A549 (cell line): ENCODE measurements at regions of chr1 and their contacts with region 1.

Region 1: GRCh38 chr1:151693076-151693651 is 23.4 kb downstream of the CELF3 start:
- DNase-seq: peak; percentile 38 to 54
- ATAC-seq: peak; percentile 83 to 90
- H3K4me3 ChIP-seq: no peak overlapping the region
- H3K27ac ChIP-seq: no peak overlapping the region
- H3K4me1 ChIP-seq: no peaks in the 10 kb centered on the region
- CTCF ChIP-seq: peak; percentile 75
- EP300 ChIP-seq: no peak
- POLR2A ChIP-seq: no peak
- RAD21 ChIP-seq: peak; percentile 73 to 86

Region 2: GRCh38 chr1:151720974-151721787 is 28.0 kb after region 1 on chr1 and contains the start of gene RIIAD1:
- CTCF ChIA-PET with region 1: interaction called, 10 read pairs
- POLR2A ChIA-PET with region 1: no interaction called
- DNase-seq: peak in 1 of 2 experiments; percentile 62
- ATAC-seq: peak; percentile 82 to 85
- H3K4me3 ChIP-seq: peak within 1 kb of the TSS; percentile 42
- H3K27ac ChIP-seq: peak within 1 kb of the TSS in 1 of 2 experiments; percentile 21; a peak in 1 of 6 replicates
- H3K4me1 ChIP-seq: peaks cover 23% of the 10 kb centered on the region; the same call in 2 of the 3 replicates
- CTCF ChIP-seq: peak; percentile 39
- EP300 ChIP-seq: no peak
- POLR2A ChIP-seq: no peak
- RAD21 ChIP-seq: peak; percentile 23 to 24; a peak in 1 of 5 replicates
- polyA plus RNA-seq, gene RIIAD1: not detected in 2 replicates

Region 3: GRCh38 chr1:151739590-151740375 is 46.6 kb after region 1 on chr1:
- CTCF ChIA-PET with region 1: interaction called, 24 read pairs
- POLR2A ChIA-PET with region 1: no interaction called
- DNase-seq: no peak
- ATAC-seq: no peak
- H3K4me3 ChIP-seq: no peak overlapping the region
- H3K27ac ChIP-seq: no peak overlapping the region
- H3K4me1 ChIP-seq: no peaks in the 10 kb centered on the region
- CTCF ChIP-seq: no peak
- EP300 ChIP-seq: no peak
- POLR2A ChIP-seq: no peak
- RAD21 ChIP-seq: no peak